Activated CD4-positive, alpha-beta T cell treated with anti-CD3 and anti-CD28 coated beads, Interleukin-2, amount 10 ng/mL, durations not matched to agents 7 days and 5 days (primary cell): ENCODE measurements at regions of chr1 and their contacts with region 1.

Region 1: GRCh38 chr1:11641776-11642305 is 12.4 kb downstream of the FBXO2 start:
- DNase-seq: no peak
- H3K4me3 Mint-ChIP-seq: no peak overlapping the region
- H3K27ac Mint-ChIP-seq: no peak overlapping the region
- H3K4me1 Mint-ChIP-seq: no peaks in the 10 kb centered on the region
- H3K27me3 Mint-ChIP-seq: peaks cover 2% of the 10 kb centered on the region

Region 2: DNA sequence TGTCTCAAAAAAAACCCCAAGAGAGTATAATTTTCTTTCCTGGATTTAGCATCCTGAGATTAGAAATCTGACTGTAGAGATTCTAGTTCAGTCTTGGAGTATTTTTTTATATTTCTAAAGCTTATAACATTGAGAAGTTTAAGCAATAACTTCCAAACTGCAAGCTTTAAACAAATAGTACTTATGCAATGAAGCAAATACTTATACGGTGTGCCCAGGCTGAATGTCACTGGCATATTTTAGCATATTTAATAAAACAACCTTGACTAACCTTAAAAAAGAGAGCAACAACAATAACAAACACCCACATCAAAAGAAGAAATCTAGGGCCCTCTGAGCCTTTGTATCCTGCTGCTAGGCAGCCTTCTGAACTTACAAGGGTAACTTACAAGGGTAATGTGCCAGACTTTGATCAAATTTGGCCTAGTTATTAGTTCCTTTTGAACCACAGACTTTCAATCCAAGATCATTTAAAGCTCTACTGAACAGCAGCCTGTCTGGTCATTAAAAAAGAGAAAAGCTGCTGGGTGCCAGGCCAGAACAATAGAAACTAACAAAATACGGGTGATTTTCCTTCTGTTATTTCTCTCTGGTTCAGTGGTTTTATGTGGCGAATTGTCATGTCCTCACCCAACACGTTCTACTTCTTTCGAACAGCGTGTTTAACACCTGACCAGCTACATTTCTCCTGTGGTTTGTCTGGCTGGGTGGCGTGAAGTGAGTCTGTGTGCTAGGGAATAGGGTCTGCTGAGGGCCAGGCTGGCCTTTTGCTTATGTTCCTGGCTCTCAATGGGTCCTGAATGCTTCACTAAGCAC is 395.7 kb before region 1 on chr1:
- CTCF ChIA-PET with region 1: interaction called, 15 read pairs
- POLR2A ChIA-PET with region 1: no interaction called
- DNase-seq: no peak
- H3K4me3 Mint-ChIP-seq: no peak overlapping the region
- H3K27ac Mint-ChIP-seq: peak overlapping the region; percentile 43
- H3K4me1 Mint-ChIP-seq: peaks cover 10% of the 10 kb centered on the region
- H3K27me3 Mint-ChIP-seq: no peaks in the 10 kb centered on the region

Region 3: GRCh38 chr1:11611638-11612327 is 30.1 kb before region 1 on chr1:
- CTCF ChIA-PET with region 1: no interaction called
- POLR2A ChIA-PET with region 1: no interaction called
- DNase-seq: no peak
- H3K4me3 Mint-ChIP-seq: no peak overlapping the region
- H3K27ac Mint-ChIP-seq: no peak overlapping the region
- H3K4me1 Mint-ChIP-seq: no peaks in the 10 kb centered on the region
- H3K27me3 Mint-ChIP-seq: no peaks in the 10 kb centered on the region

Region 4: DNA sequence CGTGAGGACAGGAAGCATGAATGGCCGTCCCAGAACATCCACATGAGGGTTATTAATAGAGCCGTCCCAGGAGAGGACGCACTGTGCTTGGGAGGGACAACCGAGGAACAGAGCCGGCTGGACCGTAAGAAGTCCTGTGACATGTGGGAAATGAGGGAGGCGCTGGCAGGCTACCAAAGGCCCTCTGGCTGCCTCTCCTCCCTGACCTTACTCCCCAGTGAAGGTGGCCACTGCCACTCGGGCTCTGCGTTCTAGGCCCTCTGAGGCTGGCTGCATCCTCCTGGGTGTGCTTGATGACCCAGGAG is 232.4 kb after region 1 on chr1:
- CTCF ChIA-PET with region 1: no interaction called
- POLR2A ChIA-PET with region 1: no interaction called
- DNase-seq: no peak
- H3K4me3 Mint-ChIP-seq: no peak overlapping the region
- H3K27ac Mint-ChIP-seq: no peak overlapping the region
- H3K4me1 Mint-ChIP-seq: no peaks in the 10 kb centered on the region
- H3K27me3 Mint-ChIP-seq: peaks cover 5% of the 10 kb centered on the region